HepG2 (cell line): ENCODE measurements at regions of chr6 and their contacts with region 1.

Region 1: GRCh38 chr6:98947351-98948292 is at the start of gene FBXL4:
- DNase-seq: peak; percentile 87
- ATAC-seq: peak; percentile 94
- H3K4me3 ChIP-seq: peak within 1 kb of the TSS; percentile 87 to 90 (median 87)
- H3K27ac ChIP-seq: peak within 1 kb of the TSS; percentile 89
- H3K4me1 ChIP-seq: peaks cover 32% of the 10 kb centered on the region
- H3K27me3 ChIP-seq: no peaks in the 10 kb centered on the region; a peak in 2 of 5 replicates
- CTCF ChIP-seq: no peak
- EP300 ChIP-seq: no peak
- POLR2A ChIP-seq: peak; percentile 62 to 64
- RAD21 ChIP-seq: peak; percentile 10; the same call in 1 of the 2 replicates
- total RNA-seq, gene FBXL4: 13.2 and 16.2 TPM in 2 replicates

Region 2: GRCh38 chr6:98894810-98895209 is 52.8 kb before region 1 on chr6:
- CTCF ChIA-PET with region 1: no interaction called
- POLR2A ChIA-PET with region 1: no interaction called
- in situ Hi-C with region 1: no loop called
- intact Hi-C with region 1: loop called (anchors 5 kb)
- DNase-seq: no peak
- ATAC-seq: no peak
- H3K4me3 ChIP-seq: no peak overlapping the region
- H3K27ac ChIP-seq: no peak overlapping the region
- H3K4me1 ChIP-seq: no peaks in the 10 kb centered on the region
- H3K27me3 ChIP-seq: no peaks in the 10 kb centered on the region
- CTCF ChIP-seq: no peak
- EP300 ChIP-seq: no peak
- POLR2A ChIP-seq: no peak
- RAD21 ChIP-seq: no peak

Region 3: DNA sequence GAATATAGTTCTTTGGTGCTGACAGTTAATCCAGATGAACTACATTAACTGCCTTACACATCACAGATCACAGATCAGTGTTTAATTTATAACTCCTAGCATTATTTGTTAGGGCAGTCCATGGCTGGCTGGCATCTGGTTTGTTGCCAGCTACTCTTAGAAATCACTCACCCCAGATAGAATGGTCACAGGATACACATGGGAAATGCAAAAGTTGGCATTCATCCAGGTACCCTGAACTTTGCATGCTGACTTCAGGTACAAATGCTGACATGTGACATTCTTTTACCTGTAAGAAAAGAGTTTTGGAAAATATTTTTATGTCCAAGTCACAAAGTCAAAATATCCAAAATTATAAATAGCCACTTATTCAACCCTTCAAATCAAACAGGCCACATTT is 20.1 kb before region 1 on chr6:
- CTCF ChIA-PET with region 1: no interaction called
- POLR2A ChIA-PET with region 1: interaction called, 3 read pairs
- in situ Hi-C with region 1: no loop called
- intact Hi-C with region 1: loop called (anchors 1 kb)
- DNase-seq: peak; percentile 31
- ATAC-seq: no peak
- H3K4me3 ChIP-seq: no peak overlapping the region
- H3K27ac ChIP-seq: no peak overlapping the region
- H3K4me1 ChIP-seq: no peaks in the 10 kb centered on the region
- H3K27me3 ChIP-seq: no peaks in the 10 kb centered on the region
- CTCF ChIP-seq: no peak
- EP300 ChIP-seq: no peak
- POLR2A ChIP-seq: no peak
- RAD21 ChIP-seq: no peak

Region 4: GRCh38 chr6:98958776-98959175 is 11.2 kb after region 1 on chr6:
- CTCF ChIA-PET with region 1: no interaction called
- POLR2A ChIA-PET with region 1: no interaction called
- in situ Hi-C with region 1: no loop called
- intact Hi-C with region 1: no loop called
- DNase-seq: no peak
- ATAC-seq: no peak
- H3K4me3 ChIP-seq: no peak overlapping the region
- H3K27ac ChIP-seq: no peak overlapping the region
- H3K4me1 ChIP-seq: no peaks in the 10 kb centered on the region
- H3K27me3 ChIP-seq: no peaks in the 10 kb centered on the region
- CTCF ChIP-seq: no peak
- EP300 ChIP-seq: no peak
- POLR2A ChIP-seq: no peak
- RAD21 ChIP-seq: no peak

Region 5: GRCh38 chr6:99425647-99426453 is 478.2 kb after region 1 on chr6:
- CTCF ChIA-PET with region 1: no interaction called
- POLR2A ChIA-PET with region 1: no interaction called
- in situ Hi-C with region 1: no loop called
- intact Hi-C with region 1: loop called (anchors 5 kb)
- DNase-seq: peak; percentile 91
- ATAC-seq: peak; percentile 77
- H3K4me3 ChIP-seq: peak overlapping the region; percentile 59 to 85 (median 84)
- H3K27ac ChIP-seq: peak overlapping the region; percentile 98
- H3K4me1 ChIP-seq: peaks cover 55% of the 10 kb centered on the region
- H3K27me3 ChIP-seq: no peaks in the 10 kb centered on the region; a peak in 1 of 5 replicates
- CTCF ChIP-seq: peak; percentile 73
- EP300 ChIP-seq: no peak
- POLR2A ChIP-seq: no peak
- RAD21 ChIP-seq: 0 out of 2 replicates have a peak, but pooled peaks have one; percentile 7